CD4-positive, alpha-beta T cell (primary cell): ENCODE measurements at regions of chr9 and their contacts with region 1.

Region 1: GRCh38 chr9:93108291-93109041 is 12.4 kb downstream of the CARD19 start:
- DNase-seq: peak in 2 of 14 experiments; percentile 39 to 48
- ATAC-seq: no peak
- H3K4me3 ChIP-seq: no peak overlapping the region
- H3K4me3 Mint-ChIP-seq: no peak overlapping the region
- H3K27ac ChIP-seq: no peak overlapping the region
- H3K27ac Mint-ChIP-seq: peak overlapping the region; percentile 52
- H3K4me1 ChIP-seq: peaks cover 65% of the 10 kb centered on the region
- H3K4me1 Mint-ChIP-seq: peaks cover 58% of the 10 kb centered on the region
- H3K27me3 ChIP-seq: no peaks in the 10 kb centered on the region
- H3K27me3 Mint-ChIP-seq: no peaks in the 10 kb centered on the region
- CTCF ChIP-seq: no peak

Region 2: DNA sequence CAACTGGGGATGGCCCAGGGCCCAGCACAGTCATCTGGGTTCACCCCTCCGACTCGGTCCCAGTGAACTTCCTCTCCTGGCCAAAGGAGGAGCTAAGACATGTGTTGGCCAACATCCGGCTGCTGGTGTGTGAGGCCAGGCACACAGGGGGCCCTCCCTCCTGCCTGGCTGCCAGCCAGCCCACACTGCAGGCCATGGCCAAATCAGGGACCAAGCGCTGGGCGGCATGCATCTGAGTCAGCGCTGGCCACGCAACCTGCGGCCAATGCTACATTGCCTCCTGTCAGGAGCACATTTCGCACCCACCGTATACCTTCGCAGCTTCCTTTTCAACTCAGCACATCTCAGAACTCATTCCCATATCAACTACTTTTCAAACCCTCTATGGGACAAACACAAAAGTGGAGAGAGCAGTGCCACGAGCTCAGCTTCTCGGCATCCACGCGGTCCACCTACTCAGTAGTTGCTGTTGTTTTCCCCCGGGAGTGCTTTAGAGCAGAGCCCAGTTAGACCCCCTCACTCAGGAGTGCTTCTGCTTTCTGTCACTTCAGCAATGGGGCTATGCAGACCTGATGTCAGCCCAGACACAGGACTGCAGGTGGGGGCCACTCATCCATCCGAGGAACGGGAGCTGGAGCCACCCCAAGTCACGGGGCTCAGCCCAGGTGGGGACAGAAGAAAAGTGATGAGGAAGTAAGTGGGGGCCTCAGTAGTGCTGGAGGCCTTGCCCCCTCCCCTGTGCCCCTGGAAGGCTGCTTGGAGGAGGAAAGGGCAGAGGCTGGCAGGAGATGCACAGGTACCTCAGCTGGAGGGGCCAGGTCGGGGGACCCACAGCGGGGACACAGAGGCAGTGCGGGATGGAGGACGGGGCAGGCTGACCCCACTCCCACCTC is 11.7 kb after region 1 on chr9:
- CTCF ChIA-PET with region 1: interaction called, 13 read pairs
- POLR2A ChIA-PET with region 1: interaction called, 6 read pairs
- intact Hi-C with region 1: no loop called
- DNase-seq: peak in 5 of 14 experiments; percentile 4 to 84 (median 64)
- ATAC-seq: peak; percentile 66
- H3K4me3 ChIP-seq: no peak overlapping the region
- H3K4me3 Mint-ChIP-seq: no peak overlapping the region
- H3K27ac ChIP-seq: peak overlapping the region in 1 of 2 donors; percentile 22
- H3K27ac Mint-ChIP-seq: peak overlapping the region; percentile 16
- H3K4me1 ChIP-seq: peaks cover 31% of the 10 kb centered on the region
- H3K4me1 Mint-ChIP-seq: peaks cover 24% of the 10 kb centered on the region
- H3K27me3 ChIP-seq: no peaks in the 10 kb centered on the region
- H3K27me3 Mint-ChIP-seq: no peaks in the 10 kb centered on the region
- CTCF ChIP-seq: peak; percentile 27

Region 3: DNA sequence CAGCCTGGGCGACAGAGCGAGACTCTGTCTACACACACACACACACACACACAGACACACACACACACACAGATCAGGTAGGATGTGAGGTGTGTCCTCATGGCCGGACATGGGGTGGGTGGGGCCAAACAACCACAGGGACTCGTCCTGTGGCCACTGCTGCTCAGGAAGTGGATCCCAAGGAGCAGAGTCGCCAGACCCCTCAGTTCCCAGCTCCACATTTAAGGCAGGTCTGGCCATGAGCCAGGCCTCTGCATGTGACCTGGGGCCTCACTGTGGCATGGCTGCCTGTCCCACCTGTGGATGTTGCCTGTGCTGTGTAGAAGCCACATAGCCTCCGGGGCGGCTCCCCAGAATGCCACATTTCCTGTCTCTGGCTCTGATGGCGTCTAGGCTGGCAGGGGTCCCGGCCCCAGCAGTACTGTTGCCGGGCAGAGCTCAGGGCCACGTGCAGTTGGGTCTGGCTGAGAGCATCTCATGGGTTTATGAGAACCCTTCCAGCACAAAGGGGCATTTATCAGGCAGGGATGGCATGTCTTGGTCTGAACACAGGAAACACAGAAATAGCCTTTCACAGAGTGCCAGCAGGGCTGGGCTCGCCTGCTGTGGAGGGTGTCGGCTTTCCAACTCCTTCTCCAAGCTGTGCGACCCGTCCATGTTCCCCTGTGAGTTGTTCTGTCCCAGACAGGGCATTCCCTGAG is 35.5 kb after region 1 on chr9:
- CTCF ChIA-PET with region 1: no interaction called
- POLR2A ChIA-PET with region 1: interaction called, 4 read pairs
- intact Hi-C with region 1: loop called in 1 of 2 experiments (anchors 1 kb)
- DNase-seq: peak; percentile 55 to 88 (median 68)
- ATAC-seq: peak; percentile 95
- H3K4me3 ChIP-seq: no peak overlapping the region
- H3K4me3 Mint-ChIP-seq: peak overlapping the region; percentile 72
- H3K27ac ChIP-seq: peak overlapping the region; percentile 72 to 80
- H3K27ac Mint-ChIP-seq: peak overlapping the region; percentile 98
- H3K4me1 ChIP-seq: peaks cover 56% of the 10 kb centered on the region
- H3K4me1 Mint-ChIP-seq: peaks cover 50% of the 10 kb centered on the region
- H3K27me3 ChIP-seq: no peaks in the 10 kb centered on the region
- H3K27me3 Mint-ChIP-seq: no peaks in the 10 kb centered on the region
- CTCF ChIP-seq: no peak

Region 4: GRCh38 chr9:93302551-93303257 is 194.2 kb after region 1 on chr9:
- CTCF ChIA-PET with region 1: interaction called, 5 read pairs
- POLR2A ChIA-PET with region 1: interaction called, 4 read pairs
- intact Hi-C with region 1: loop called (anchors 1 kb)
- DNase-seq: peak; percentile 36 to 82 (median 58)
- ATAC-seq: peak; percentile 91
- H3K4me3 ChIP-seq: no peak overlapping the region
- H3K4me3 Mint-ChIP-seq: no peak overlapping the region
- H3K27ac ChIP-seq: no peak overlapping the region
- H3K27ac Mint-ChIP-seq: no peak overlapping the region
- H3K4me1 ChIP-seq: peaks cover 8% of the 10 kb centered on the region
- H3K4me1 Mint-ChIP-seq: peaks cover 2% of the 10 kb centered on the region
- H3K27me3 ChIP-seq: no peaks in the 10 kb centered on the region
- H3K27me3 Mint-ChIP-seq: no peaks in the 10 kb centered on the region
- CTCF ChIP-seq: peak; percentile 59

Region 5: DNA sequence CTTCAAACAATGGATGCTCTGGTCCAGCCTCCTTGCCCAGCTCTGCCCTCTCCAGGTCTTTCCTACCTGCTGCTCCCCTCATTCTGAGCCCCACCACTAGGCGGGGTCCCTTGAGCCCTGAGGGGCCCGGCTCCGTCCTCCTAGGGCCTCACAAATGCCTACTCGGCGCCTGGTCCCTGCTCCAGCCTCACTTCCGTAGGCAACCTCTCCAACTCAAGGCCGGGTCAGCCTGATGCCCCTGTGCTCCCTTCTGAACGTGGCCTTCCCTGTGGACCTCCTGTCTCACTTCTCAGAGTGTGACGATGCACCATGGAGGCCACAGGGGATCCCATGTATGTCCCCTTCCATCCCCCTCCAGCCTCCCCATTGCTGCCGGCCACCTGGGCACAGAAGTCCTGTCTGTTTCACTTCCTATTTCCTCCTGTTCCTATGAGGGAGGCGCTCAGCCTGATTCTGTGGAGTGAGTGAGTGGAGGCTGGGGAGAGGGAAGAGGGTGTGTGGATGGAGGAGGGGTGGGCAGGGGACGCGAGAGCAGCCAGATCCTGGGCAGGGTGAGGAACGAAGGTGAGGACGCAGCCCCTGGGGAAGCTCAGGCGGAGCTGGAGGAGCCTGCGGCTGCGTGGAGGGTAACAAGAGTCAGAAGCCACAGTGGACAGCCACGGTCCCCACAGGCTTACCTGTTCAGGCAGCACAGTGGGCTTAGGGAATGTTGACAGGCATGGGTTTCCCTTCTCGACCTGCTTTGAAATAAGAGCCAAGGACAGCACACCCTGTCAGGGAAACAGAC is 215.9 kb after region 1 on chr9:
- CTCF ChIA-PET with region 1: no interaction called
- POLR2A ChIA-PET with region 1: no interaction called
- intact Hi-C with region 1: no loop called
- DNase-seq: no peak
- ATAC-seq: no peak
- H3K4me3 ChIP-seq: no peak overlapping the region
- H3K4me3 Mint-ChIP-seq: no peak overlapping the region
- H3K27ac ChIP-seq: no peak overlapping the region
- H3K27ac Mint-ChIP-seq: no peak overlapping the region
- H3K4me1 ChIP-seq: no peaks in the 10 kb centered on the region
- H3K4me1 Mint-ChIP-seq: no peaks in the 10 kb centered on the region
- H3K27me3 ChIP-seq: peaks cover 2 to 8% of the 10 kb centered on the region in 2 experiments
- H3K27me3 Mint-ChIP-seq: peaks cover 13% of the 10 kb centered on the region
- CTCF ChIP-seq: no peak